Endothelial cell of umbilical vein (primary cell): ENCODE measurements at regions of chr1 and their contacts with region 1.

Region 1: DNA sequence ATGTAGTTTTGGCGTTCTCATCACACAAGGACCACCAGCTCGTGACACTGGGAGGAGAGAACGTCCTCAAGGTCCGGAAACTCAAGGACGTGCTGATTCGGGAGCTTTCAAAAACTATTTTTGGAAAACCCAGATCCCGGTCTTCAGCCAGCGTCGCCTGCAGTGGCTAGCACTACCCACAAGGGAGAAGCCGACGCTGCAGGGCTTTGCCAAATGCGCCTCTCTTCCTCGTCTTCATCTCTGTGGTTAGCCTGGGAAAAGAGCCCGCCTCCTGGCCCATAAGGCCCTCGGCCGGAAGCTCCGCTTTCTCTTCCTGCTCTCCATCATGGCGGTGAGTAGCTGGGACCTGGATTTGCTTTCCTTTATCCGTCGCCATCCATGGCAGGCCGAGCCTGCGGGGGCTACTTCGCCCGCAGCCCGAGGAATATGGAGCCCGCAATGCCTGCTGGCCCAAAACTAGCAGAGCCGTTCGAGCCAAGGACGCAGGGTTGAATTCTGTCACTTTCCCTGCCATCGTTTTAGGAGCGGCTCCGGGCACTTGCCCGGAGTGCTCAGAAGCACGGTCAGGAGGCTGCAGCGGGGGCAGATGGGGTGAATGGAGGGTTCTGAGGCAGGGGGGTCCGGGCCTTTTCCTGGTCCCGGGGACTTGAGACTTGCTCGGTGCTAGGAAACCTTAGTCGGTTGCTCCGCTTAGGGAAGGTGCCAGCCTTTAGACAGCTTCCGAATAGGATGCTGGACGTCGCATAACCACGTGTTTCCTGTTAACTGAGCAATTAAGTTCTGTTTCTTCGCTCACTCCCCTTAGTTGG is at the start of gene RPL11:
- DNase-seq: peak; percentile 96
- H3K4me3 ChIP-seq: peak within 1 kb of the TSS; percentile 70 to 96 (median 88)
- H3K27ac ChIP-seq: peak within 1 kb of the TSS; percentile 77
- H3K4me1 ChIP-seq: peaks cover 30% of the 10 kb centered on the region
- H3K27me3 ChIP-seq: no peaks in the 10 kb centered on the region
- CTCF ChIP-seq: peak; percentile 58 to 81
- POLR2A ChIP-seq: peak; percentile 98
- total RNA-seq, gene RPL11: 1,084 and 1,169 TPM in 2 replicates

Region 2: GRCh38 chr1:23019094-23019862 is 672.4 kb before region 1 on chr1 and contains the start of gene KDM1A:
- CTCF ChIA-PET with region 1: no interaction called
- POLR2A ChIA-PET with region 1: no interaction called
- dilution Hi-C with region 1: no loop called
- intact Hi-C with region 1: loop called (anchors 2 kb)
- DNase-seq: peak; percentile 97
- H3K4me3 ChIP-seq: peak within 1 kb of the TSS; percentile 78 to 93 (median 85)
- H3K27ac ChIP-seq: peak within 1 kb of the TSS; percentile 51
- H3K4me1 ChIP-seq: peaks cover 8% of the 10 kb centered on the region
- H3K27me3 ChIP-seq: no peaks in the 10 kb centered on the region
- CTCF ChIP-seq: peak; percentile 14 to 22
- POLR2A ChIP-seq: peak; percentile 90
- total RNA-seq, gene KDM1A: 105 and 111 TPM in 2 replicates

Region 3: GRCh38 chr1:23585447-23586015 is 106.2 kb before region 1 on chr1:
- CTCF ChIA-PET with region 1: no interaction called
- POLR2A ChIA-PET with region 1: no interaction called
- dilution Hi-C with region 1: no loop called
- intact Hi-C with region 1: no loop called
- DNase-seq: no peak
- H3K4me3 ChIP-seq: no peak overlapping the region
- H3K27ac ChIP-seq: no peak overlapping the region
- H3K4me1 ChIP-seq: no peaks in the 10 kb centered on the region
- H3K27me3 ChIP-seq: peaks cover 4 to 8% of the 10 kb centered on the region in 2 experiments
- CTCF ChIP-seq: no peak
- POLR2A ChIP-seq: no peak

Region 4: DNA sequence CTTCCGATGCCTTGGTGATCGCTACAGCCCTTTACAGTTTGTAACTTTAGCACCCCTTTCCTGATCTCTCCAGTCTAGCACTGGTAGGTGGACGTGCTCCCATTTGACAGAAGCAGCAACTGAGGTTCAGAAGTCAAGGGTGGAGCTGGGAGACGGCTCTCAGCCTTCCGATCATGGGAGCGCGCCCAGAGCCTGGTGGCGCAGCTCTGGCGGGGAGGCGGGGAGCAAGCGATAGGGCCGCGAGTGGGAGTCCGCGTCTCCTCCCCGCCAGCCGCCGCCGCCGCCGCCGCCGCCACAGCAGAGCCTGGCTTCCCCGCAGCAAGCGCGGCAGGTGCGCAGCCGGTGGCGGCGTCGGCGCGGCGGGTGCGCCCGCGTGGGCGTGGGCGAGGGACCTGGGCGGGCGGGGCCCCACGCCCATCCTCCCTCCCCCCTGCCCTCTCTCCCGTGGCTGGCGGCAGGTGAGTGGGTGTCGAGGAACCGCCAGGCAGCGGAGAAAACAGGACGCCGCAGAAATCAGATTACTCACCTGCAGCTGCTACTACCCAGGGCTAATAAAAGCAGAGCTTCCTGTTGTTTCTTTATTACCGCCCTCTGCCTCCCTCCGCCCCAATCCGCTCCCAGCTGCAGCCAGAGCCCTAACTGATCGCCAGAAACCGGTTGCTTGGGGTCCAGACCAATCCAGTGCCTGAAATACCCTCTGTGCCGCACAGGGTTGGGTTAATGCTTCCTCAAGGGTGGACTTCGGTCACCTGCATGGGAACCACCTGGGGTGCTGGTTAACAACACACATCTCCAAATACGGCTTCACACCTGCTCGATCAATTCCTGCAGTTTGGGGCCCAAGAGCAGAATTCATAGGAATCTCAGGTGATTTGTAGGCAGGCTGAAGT is 72.2 kb before region 1 on chr1:
- CTCF ChIA-PET with region 1: no interaction called
- POLR2A ChIA-PET with region 1: no interaction called
- dilution Hi-C with region 1: no loop called
- intact Hi-C with region 1: no loop called
- DNase-seq: peak; percentile 46
- H3K4me3 ChIP-seq: peak overlapping the region in 1 of 3 experiments; percentile 9
- H3K27ac ChIP-seq: no peak overlapping the region
- H3K4me1 ChIP-seq: peaks cover 4% of the 10 kb centered on the region
- H3K27me3 ChIP-seq: peaks cover 28 to 44% of the 10 kb centered on the region in 2 experiments
- CTCF ChIP-seq: no peak
- POLR2A ChIP-seq: no peak

Region 5: DNA sequence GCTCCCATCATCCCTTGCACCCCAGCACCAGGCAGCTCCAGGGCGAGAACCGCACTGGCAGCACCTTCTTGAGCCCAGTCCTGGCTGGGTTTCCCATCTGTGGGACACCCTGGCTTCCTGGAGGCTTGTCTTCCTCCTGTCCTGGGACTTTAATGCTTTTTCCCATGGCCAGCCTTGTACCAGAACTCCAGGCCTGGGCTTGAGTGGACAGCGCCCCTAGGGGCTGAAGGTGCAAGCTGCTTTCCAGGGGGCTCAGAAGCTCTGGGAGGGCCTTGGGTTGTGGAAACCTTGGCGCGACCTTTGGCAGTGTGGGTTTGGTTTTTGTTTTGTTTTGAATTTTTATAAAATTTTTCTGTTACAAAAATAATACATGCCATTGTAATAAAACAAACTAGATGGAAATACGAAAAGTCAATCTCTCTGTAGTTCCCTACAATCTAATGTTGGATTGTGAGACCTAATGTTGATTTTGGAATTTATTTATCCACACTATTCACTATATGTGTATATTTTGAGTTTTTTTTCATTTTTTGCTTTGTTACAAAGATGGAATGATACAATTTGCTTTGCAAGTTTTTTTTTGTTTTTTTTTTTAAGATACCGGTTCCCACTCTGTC is 33.9 kb before region 1 on chr1:
- CTCF ChIA-PET with region 1: interaction called, 10 read pairs
- POLR2A ChIA-PET with region 1: no interaction called
- dilution Hi-C with region 1: no loop called
- intact Hi-C with region 1: no loop called
- DNase-seq: peak; percentile 42
- H3K4me3 ChIP-seq: no peak overlapping the region
- H3K27ac ChIP-seq: no peak overlapping the region
- H3K4me1 ChIP-seq: no peaks in the 10 kb centered on the region
- H3K27me3 ChIP-seq: peaks cover 0 to 4% of the 10 kb centered on the region in 2 experiments
- CTCF ChIP-seq: peak; percentile 94 to 95
- POLR2A ChIP-seq: no peak

Region 6: GRCh38 chr1:23743287-23744052 is 51.8 kb after region 1 on chr1 and contains the start of gene ELOA:
- CTCF ChIA-PET with region 1: interaction called, 5 read pairs
- POLR2A ChIA-PET with region 1: interaction called, 3 read pairs
- dilution Hi-C with region 1: no loop called
- intact Hi-C with region 1: loop called (anchors 1 kb)
- DNase-seq: peak; percentile 56
- H3K4me3 ChIP-seq: peak within 1 kb of the TSS; percentile 81 to 99 (median 81)
- H3K27ac ChIP-seq: peak within 1 kb of the TSS; percentile 58
- H3K4me1 ChIP-seq: peaks cover 19% of the 10 kb centered on the region
- H3K27me3 ChIP-seq: no peaks in the 10 kb centered on the region
- CTCF ChIP-seq: no peak
- POLR2A ChIP-seq: peak; percentile 92
- total RNA-seq, gene ELOA: 41.0 and 42.6 TPM in 2 replicates